Activated CD4-positive, alpha-beta T cell treated with anti-CD3 and anti-CD28 coated beads for 36 hours (primary cell): ENCODE measurements at regions of chr19 and their contacts with region 1.

Region 1: DNA sequence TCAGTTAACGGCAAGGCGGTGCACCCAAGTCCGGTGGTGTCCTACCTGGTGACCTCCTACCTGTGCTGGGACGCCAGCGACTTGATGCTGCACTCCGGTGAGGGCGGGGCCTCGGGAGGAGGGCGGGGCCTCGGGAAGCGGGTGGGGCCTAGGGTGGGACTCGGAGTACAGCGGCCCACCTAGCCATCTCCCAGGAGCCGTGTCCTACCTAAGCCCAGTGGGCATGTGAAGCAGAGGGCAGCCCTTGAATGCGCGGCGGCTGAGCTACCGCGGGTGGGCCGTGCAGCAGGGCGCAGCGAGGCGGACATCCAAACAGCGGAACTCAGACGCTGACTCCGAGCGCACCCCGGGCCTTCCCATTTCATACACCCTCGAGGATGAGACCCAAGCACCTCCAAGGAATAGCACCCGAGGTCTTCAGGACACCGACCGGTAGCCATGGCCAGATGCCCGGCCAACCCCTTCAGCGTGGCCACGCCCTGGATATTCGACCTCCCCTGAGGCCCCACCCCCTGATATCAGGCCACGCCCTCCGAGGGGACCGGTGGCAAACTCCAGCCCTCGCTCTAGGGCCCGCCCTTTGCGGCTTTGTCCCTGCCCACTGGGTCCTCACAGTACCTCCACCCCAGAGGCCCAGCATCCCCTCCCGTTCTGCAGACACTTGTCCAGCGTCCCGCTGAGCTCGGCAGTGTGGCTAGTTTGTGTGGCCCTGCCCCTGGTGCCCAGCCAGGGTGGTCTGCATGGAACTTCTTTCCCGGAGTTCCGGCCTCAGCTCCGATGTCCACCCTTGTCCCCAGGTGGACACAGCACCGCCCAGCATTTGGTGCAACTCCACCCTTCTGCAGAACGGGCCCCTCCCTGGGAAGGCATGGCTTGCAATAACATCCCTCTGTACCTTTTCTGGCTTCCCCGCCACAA is 5.4 kb downstream of the KLK1 start:
- DNase-seq: peak; percentile 82
- ATAC-seq: peak; percentile 59
- H3K4me3 Mint-ChIP-seq: peak overlapping the region; percentile 73
- H3K27ac Mint-ChIP-seq: peak overlapping the region; percentile 83
- H3K4me1 Mint-ChIP-seq: peaks cover 45% of the 10 kb centered on the region
- H3K27me3 Mint-ChIP-seq: peaks cover 61% of the 10 kb centered on the region

Region 2: DNA sequence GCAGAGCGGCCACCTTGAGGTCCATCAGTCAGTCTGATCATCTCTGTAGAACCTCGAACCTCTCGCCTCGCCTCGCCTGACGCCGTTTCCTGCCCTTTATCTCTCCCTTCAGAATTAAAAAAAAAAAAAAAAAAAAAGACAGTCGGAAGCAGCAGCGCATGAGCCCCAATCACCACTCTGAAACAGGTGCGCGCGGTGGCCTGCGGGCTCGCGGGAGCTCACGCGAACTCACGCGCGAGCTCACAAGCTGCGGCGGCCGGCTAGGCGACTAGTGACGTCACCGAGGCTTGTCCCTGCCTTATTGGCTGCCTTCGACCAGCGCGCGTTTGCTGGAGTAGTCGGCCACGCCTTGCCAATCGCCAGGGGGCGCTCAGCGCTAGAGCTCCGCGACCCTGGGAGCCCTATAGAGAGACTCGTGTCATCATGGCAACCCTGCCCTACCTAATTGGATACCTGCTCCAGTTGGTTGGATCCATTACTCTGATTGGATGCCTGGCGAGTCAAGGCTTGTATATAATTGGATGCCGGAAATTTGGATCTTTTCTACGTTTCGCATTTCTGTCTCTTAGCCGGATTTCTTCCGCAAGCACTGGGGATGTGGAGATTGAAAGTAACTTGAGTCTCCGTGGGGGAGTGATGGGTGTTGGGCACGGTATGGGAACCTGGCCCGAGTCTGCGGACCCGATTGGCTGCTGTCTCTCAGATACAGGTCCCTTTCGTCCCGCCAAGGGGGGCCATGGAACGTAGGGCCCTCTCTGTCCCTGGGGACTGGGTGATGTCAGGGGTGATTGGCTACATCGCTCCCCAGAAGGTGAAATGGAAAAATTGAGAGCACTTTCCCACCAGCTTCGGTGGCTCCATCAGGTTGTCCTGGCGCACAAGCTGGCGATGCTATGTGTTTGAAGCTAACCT is 210.1 kb before region 1 on chr19:
- CTCF ChIA-PET with region 1: no interaction called
- POLR2A ChIA-PET with region 1: no interaction called
- intact Hi-C with region 1: no loop called
- DNase-seq: peak; percentile 95
- ATAC-seq: peak; percentile 93
- H3K4me3 Mint-ChIP-seq: peak overlapping the region; percentile 5
- H3K27ac Mint-ChIP-seq: no peak overlapping the region
- H3K4me1 Mint-ChIP-seq: peaks cover 13% of the 10 kb centered on the region
- H3K27me3 Mint-ChIP-seq: peaks cover 35% of the 10 kb centered on the region

Region 3: GRCh38 chr19:50835785-50836542 is 17.8 kb after region 1 on chr19:
- CTCF ChIA-PET with region 1: interaction called, 3 read pairs
- POLR2A ChIA-PET with region 1: interaction called, 3 read pairs
- intact Hi-C with region 1: loop called in 1 of 2 experiments (anchors 1 kb)
- DNase-seq: peak; percentile 88
- ATAC-seq: peak; percentile 95
- H3K4me3 Mint-ChIP-seq: peak overlapping the region; percentile 68
- H3K27ac Mint-ChIP-seq: peak overlapping the region; percentile 37
- H3K4me1 Mint-ChIP-seq: peaks cover 7% of the 10 kb centered on the region
- H3K27me3 Mint-ChIP-seq: peaks cover 46% of the 10 kb centered on the region

Region 4: DNA sequence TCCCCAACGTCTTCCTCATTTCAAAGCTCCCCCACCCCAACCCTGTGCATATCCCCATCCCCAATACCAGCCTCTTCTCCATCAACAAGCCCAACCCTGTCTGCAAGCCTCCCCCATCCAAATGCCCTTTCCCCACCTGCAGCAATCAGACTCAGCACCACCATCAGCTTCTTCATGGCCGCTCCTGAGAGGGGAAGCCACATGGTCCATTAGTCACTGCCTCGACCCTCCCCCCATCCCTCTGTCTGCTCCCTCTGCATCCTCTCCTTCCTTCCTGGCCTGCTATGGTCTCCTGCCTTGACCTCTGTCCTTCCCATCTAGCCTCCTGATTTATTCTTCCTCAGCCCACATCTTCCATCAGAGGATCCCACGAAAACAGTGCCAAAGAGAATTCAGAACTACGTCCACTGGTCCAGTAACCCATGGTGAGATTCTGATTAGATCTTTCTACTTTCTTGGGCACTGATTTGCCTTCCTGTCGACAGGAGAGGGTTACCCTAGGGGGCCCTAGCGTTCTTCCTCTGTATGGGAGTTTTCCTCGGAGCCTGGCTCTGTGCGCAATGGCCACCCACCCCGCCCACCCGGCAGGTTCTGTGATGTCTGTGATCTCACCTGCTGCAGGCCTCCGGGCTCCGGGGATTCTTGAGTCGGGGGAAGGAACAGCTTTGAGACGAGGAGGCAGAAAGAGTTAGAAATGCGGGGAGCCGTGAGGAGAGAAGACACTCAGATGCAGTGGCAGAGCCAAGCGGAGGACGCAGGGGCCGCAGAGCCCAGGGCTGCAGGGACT is 149.9 kb after region 1 on chr19:
- CTCF ChIA-PET with region 1: no interaction called
- POLR2A ChIA-PET with region 1: no interaction called
- intact Hi-C with region 1: no loop called
- DNase-seq: no peak
- ATAC-seq: no peak
- H3K4me3 Mint-ChIP-seq: no peak overlapping the region
- H3K27ac Mint-ChIP-seq: no peak overlapping the region
- H3K4me1 Mint-ChIP-seq: no peaks in the 10 kb centered on the region
- H3K27me3 Mint-ChIP-seq: peaks cover 37% of the 10 kb centered on the region